Breast epithelium (tissue), 4 donors: ENCODE measurements at regions of chr5 and their contacts with region 1.

Region 1: GRCh38 chr5:174735498-174736330 is 11.3 kb downstream of the MSX2 start:
- DNase-seq: no peak
- H3K4me3 ChIP-seq: peak overlapping the region in 2 of 3 donors; percentile 37 to 58
- H3K27ac ChIP-seq: no peak overlapping the region
- H3K4me1 ChIP-seq: no peaks in the 10 kb centered on the region
- H3K27me3 ChIP-seq: peaks cover 0 to 37% of the 10 kb centered on the region in 2 donors
- CTCF ChIP-seq: peak in 2 of 3 donors; percentile 38 to 68
- POLR2A ChIP-seq: no peak

Region 2: GRCh38 chr5:174760721-174761120 is 25.0 kb after region 1 on chr5:
- intact Hi-C with region 1: loop called (anchors 1 kb)
- DNase-seq: no peak
- H3K4me3 ChIP-seq: no peak overlapping the region
- H3K27ac ChIP-seq: no peak overlapping the region
- H3K4me1 ChIP-seq: no peaks in the 10 kb centered on the region
- H3K27me3 ChIP-seq: no peaks in the 10 kb centered on the region
- CTCF ChIP-seq: no peak
- POLR2A ChIP-seq: no peak